ENCODE measurements at regions of chr10 and their contacts with region 1.

Region 1: GRCh38 chr10:23067939-23068775 is 27.2 kb upstream of the MSRB2 start:
- DNase-seq: peak; percentile 14 to 76 (median 68)
- ATAC-seq: peak; percentile 48
- H3K4me3 ChIP-seq: no peak overlapping the region
- H3K4me3 Mint-ChIP-seq: no peak overlapping the region
- H3K27ac ChIP-seq: no peak overlapping the region
- H3K27ac Mint-ChIP-seq: no peak overlapping the region
- H3K4me1 ChIP-seq: no peaks in the 10 kb centered on the region
- H3K4me1 Mint-ChIP-seq: peaks cover 1% of the 10 kb centered on the region
- H3K27me3 ChIP-seq: no peaks in the 10 kb centered on the region
- H3K27me3 Mint-ChIP-seq: peaks cover 17% of the 10 kb centered on the region
- CTCF ChIP-seq: peak; percentile 77

Region 2: DNA sequence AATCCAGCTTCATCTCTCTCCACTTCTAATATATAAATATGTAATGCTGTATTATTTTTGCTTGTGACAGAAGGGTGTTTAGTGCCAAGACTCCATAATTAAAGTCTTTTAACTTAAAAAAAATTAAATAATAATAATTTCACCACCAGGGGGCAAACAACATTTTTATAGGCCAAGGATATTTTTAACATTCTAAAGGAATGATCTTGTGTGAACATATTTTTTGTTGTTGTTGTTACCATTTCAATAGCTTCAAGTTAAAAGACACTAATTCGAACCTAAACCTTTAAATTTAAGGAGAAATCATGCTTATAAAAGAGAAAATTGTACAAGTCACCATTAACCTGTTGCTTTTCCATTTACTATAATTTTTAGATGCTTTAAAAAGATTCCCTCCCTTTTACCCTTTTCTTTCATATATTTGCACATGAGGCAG is 1057.2 kb before region 1 on chr10:
- CTCF ChIA-PET with region 1: no interaction called
- POLR2A ChIA-PET with region 1: no interaction called
- intact Hi-C with region 1: loop called in 1 of 2 experiments (anchors 5 kb)
- DNase-seq: peak in 2 of 9 experiments; percentile 33 to 49
- ATAC-seq: no peak
- H3K4me3 ChIP-seq: no peak overlapping the region
- H3K4me3 Mint-ChIP-seq: no peak overlapping the region
- H3K27ac ChIP-seq: no peak overlapping the region
- H3K27ac Mint-ChIP-seq: no peak overlapping the region
- H3K4me1 ChIP-seq: no peaks in the 10 kb centered on the region
- H3K4me1 Mint-ChIP-seq: no peaks in the 10 kb centered on the region
- H3K27me3 ChIP-seq: no peaks in the 10 kb centered on the region
- H3K27me3 Mint-ChIP-seq: peaks cover 1% of the 10 kb centered on the region
- CTCF ChIP-seq: peak; percentile 63

Region 3: DNA sequence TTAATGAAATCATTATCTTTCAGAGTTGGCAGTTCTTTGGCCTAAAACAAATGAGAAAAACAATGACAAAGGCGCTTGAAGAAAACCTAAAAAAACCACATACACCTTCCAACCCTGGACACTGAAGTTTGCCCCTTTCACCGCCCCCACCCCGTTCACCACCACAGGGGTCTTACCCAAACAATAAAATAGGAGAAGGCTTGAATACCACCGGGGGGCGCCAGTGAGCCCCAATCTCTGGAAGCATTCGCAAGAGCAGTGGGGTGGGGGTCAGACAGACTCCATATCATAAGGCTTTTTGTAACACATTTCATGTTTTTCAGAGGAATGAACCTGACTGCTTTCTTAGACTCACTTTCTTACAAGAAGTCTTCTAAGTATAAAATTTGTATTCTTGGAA is 517.4 kb before region 1 on chr10:
- CTCF ChIA-PET with region 1: no interaction called
- POLR2A ChIA-PET with region 1: no interaction called
- intact Hi-C with region 1: loop called in 1 of 2 experiments (anchors 5 kb)
- DNase-seq: peak; percentile 37 to 83 (median 75)
- ATAC-seq: peak; percentile 79
- H3K4me3 ChIP-seq: no peak overlapping the region
- H3K4me3 Mint-ChIP-seq: no peak overlapping the region
- H3K27ac ChIP-seq: no peak overlapping the region
- H3K27ac Mint-ChIP-seq: peak overlapping the region; percentile 67
- H3K4me1 ChIP-seq: no peaks in the 10 kb centered on the region
- H3K4me1 Mint-ChIP-seq: peaks cover 30% of the 10 kb centered on the region
- H3K27me3 ChIP-seq: no peaks in the 10 kb centered on the region
- H3K27me3 Mint-ChIP-seq: no peaks in the 10 kb centered on the region
- CTCF ChIP-seq: peak; percentile 81

Region 4: DNA sequence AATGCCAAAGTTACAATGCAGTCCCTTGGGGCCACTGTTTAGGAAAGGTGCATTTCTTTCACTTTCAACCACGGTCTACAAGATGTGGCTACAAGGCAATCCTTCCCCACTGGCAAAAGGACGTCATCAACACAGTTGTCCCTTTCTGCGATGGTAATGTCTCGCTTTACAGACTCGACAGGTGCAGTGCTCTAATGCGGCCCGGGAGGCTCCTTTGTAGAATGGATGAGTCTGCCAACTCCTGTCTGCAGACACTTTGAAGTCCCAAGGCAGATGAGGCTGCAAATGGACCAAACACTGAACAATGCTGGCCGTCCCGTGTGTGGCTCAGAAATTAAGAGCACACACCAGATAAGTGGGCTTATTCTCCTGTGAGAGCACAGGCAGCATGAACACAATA is 487.4 kb before region 1 on chr10:
- CTCF ChIA-PET with region 1: no interaction called
- POLR2A ChIA-PET with region 1: no interaction called
- intact Hi-C with region 1: loop called in 1 of 2 experiments (anchors 10 kb)
- DNase-seq: no peak
- ATAC-seq: no peak
- H3K4me3 ChIP-seq: no peak overlapping the region
- H3K4me3 Mint-ChIP-seq: no peak overlapping the region
- H3K27ac ChIP-seq: no peak overlapping the region
- H3K27ac Mint-ChIP-seq: peak overlapping the region; percentile 83
- H3K4me1 ChIP-seq: peaks cover 6% of the 10 kb centered on the region
- H3K4me1 Mint-ChIP-seq: peaks cover 61% of the 10 kb centered on the region
- H3K27me3 ChIP-seq: no peaks in the 10 kb centered on the region
- H3K27me3 Mint-ChIP-seq: no peaks in the 10 kb centered on the region
- CTCF ChIP-seq: no peak